ENCODE measurements at regions of chr16 and their contacts with region 1.

Region 1: DNA sequence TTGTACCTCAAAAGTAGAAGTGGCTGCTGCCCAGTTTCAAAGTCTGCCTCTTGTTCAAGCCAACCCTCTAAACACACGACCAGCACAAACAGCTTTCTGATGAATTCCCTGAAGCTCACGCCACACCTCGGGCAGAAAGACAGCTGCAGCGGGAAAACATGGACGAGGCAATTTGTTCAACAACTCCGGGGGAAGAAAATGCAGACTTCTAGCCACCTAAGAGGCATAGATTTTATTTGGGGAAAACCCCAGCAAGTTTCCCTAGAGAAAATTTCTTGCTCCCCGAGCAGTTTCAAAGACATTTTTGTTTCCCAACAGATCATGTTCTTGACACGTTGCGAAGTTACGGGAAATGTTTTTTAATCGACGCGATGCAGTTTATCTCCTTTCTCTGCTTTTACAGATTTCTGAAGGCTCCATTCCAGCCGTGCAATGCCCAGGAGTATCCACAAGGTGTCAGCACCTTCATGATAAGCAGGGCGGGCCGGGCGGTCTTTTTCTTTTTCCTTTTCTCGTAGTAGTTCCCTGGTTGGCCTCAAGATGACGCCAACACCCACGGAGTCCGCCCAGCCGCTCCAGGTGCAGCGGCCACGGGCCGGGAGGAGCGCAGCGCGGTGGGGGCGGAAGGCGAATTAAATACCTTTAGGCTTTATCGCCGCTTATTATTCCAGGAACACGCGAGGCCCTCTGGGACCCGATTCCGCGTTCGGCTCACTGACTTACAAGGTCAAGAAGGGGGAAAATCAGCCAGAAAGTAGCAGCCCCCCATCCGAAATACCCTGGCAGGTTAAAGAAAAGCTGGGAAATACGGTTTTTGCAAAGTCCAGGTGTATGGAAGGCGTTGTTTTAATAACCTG is 2.9 kb upstream of the FOXC2 start:
- DNase-seq: peak; percentile 81
- H3K4me3 ChIP-seq: peak overlapping the region; percentile 11 to 38 (median 12)
- H3K27ac ChIP-seq: no peak overlapping the region
- H3K4me1 ChIP-seq: peaks cover 11% of the 10 kb centered on the region
- H3K27me3 ChIP-seq: no peaks in the 10 kb centered on the region
- CTCF ChIP-seq: peak; percentile 100

Region 2: GRCh38 chr16:86590501-86591144 is 26.9 kb after region 1 on chr16:
- CTCF ChIA-PET with region 1: no interaction called
- dilution Hi-C with region 1: no loop called
- in situ Hi-C with region 1: no loop called
- intact Hi-C with region 1: no loop called
- DNase-seq: peak; percentile 79
- H3K4me3 ChIP-seq: no peak overlapping the region
- H3K27ac ChIP-seq: no peak overlapping the region
- H3K4me1 ChIP-seq: peaks cover 15% of the 10 kb centered on the region
- H3K27me3 ChIP-seq: peaks cover 5% of the 10 kb centered on the region
- CTCF ChIP-seq: no peak

Region 3: DNA sequence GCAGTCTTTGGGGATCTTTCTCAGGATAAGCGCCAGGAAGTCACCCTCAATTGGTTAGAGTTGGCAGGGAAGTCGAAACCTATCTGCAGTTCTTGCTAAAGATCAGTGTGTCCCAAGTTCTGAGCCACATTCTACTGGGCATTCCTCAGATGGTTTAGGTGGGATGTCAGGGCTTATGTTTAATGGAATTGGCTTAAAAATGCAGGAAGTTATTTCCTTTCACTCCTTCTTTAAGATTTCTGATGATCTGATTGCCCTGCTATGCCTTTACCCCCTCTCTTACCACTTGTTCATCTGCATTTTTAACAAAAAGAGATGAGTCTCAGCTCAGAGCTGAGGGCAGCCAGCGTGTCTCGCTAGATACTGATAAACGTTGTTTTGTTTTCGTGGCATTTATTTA is 45.4 kb after region 1 on chr16:
- CTCF ChIA-PET with region 1: no interaction called
- dilution Hi-C with region 1: no loop called
- in situ Hi-C with region 1: no loop called
- intact Hi-C with region 1: no loop called
- DNase-seq: no peak
- H3K4me3 ChIP-seq: no peak overlapping the region
- H3K27ac ChIP-seq: no peak overlapping the region
- H3K4me1 ChIP-seq: no peaks in the 10 kb centered on the region
- H3K27me3 ChIP-seq: no peaks in the 10 kb centered on the region
- CTCF ChIP-seq: no peak

Region 4: GRCh38 chr16:86664533-86665318 is 101.0 kb after region 1 on chr16:
- CTCF ChIA-PET with region 1: no interaction called
- dilution Hi-C with region 1: no loop called
- in situ Hi-C with region 1: no loop called
- intact Hi-C with region 1: no loop called
- DNase-seq: peak; percentile 99
- H3K4me3 ChIP-seq: peak overlapping the region in 1 of 3 experiments; percentile 23
- H3K27ac ChIP-seq: peak overlapping the region; percentile 96
- H3K4me1 ChIP-seq: peaks cover 28% of the 10 kb centered on the region
- H3K27me3 ChIP-seq: no peaks in the 10 kb centered on the region
- CTCF ChIP-seq: no peak

Region 5: DNA sequence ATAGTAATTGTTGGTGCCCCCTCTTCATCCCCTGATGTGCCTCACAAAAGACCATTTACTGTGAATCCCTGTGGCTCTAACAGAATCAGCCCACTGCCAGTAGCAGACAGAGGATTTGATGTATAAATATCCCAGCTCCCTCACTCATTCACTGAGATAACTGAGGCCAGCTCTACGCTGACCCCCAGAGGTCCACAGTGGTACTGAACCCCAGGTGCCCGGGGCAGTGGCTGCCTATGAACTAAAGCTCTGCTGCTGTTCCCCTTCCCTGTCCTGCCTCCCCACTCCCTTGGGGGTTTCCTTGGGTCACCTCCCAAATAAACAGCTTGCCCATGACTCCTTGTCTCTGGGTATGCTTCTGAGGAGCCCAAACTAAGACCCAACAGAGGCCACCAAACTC is 310.4 kb after region 1 on chr16:
- CTCF ChIA-PET with region 1: no interaction called
- dilution Hi-C with region 1: no loop called
- in situ Hi-C with region 1: no loop called
- intact Hi-C with region 1: loop called (anchors 1 kb)
- DNase-seq: peak; percentile 20
- H3K4me3 ChIP-seq: no peak overlapping the region
- H3K27ac ChIP-seq: no peak overlapping the region
- H3K4me1 ChIP-seq: no peaks in the 10 kb centered on the region
- H3K27me3 ChIP-seq: no peaks in the 10 kb centered on the region
- CTCF ChIP-seq: peak; percentile 65 to 68

Region 6: GRCh38 chr16:87056083-87056482 is 492.4 kb after region 1 on chr16:
- CTCF ChIA-PET with region 1: interaction called, 7 read pairs
- dilution Hi-C with region 1: no loop called
- in situ Hi-C with region 1: loop called (anchors 5 to 10 kb)
- intact Hi-C with region 1: loop called (anchors 1 kb)
- DNase-seq: peak; percentile 7
- H3K4me3 ChIP-seq: no peak overlapping the region
- H3K27ac ChIP-seq: no peak overlapping the region
- H3K4me1 ChIP-seq: no peaks in the 10 kb centered on the region
- H3K27me3 ChIP-seq: no peaks in the 10 kb centered on the region
- CTCF ChIP-seq: peak in 1 of 2 donors; percentile 24

Region 7: GRCh38 chr16:87203060-87203656 is 639.4 kb after region 1 on chr16:
- CTCF ChIA-PET with region 1: no interaction called
- dilution Hi-C with region 1: no loop called
- in situ Hi-C with region 1: no loop called
- intact Hi-C with region 1: loop called (anchors 5 kb)
- DNase-seq: peak; percentile 24
- H3K4me3 ChIP-seq: no peak overlapping the region
- H3K27ac ChIP-seq: no peak overlapping the region
- H3K4me1 ChIP-seq: peaks cover 24% of the 10 kb centered on the region
- H3K27me3 ChIP-seq: no peaks in the 10 kb centered on the region
- CTCF ChIP-seq: peak; percentile 78 to 88

Region 8: DNA sequence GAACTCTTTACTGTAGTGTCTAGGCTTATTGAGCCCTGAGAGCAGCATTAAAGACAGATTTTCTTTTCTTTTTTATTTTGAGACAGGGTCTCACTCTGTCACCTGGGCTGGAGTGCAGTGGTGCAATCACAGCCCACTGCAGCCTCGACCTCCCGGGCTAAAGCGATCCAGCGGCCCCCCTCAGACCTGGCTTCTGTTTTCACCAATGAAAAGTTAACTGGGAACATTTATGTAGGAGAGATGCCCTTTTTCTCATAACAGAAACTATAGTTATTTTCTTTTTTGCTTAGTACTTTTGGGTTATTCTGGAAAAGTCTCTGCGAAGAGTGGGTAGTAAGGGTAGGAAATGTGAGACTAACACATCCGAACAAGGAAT is 830.0 kb after region 1 on chr16:
- CTCF ChIA-PET with region 1: no interaction called
- dilution Hi-C with region 1: loop called (anchors 10 kb)
- in situ Hi-C with region 1: loop called in 1 of 2 experiments (anchors 25 kb)
- intact Hi-C with region 1: loop called (anchors 1 kb)
- DNase-seq: no peak
- H3K4me3 ChIP-seq: peak overlapping the region; percentile 68 to 90 (median 84)
- H3K27ac ChIP-seq: peak overlapping the region; percentile 87
- H3K4me1 ChIP-seq: peaks cover 28% of the 10 kb centered on the region
- H3K27me3 ChIP-seq: no peaks in the 10 kb centered on the region
- CTCF ChIP-seq: no peak

Region 9: GRCh38 chr16:87877938-87878507 is 1314.3 kb after region 1 on chr16:
- CTCF ChIA-PET with region 1: no interaction called
- dilution Hi-C with region 1: no loop called
- in situ Hi-C with region 1: no loop called
- intact Hi-C with region 1: loop called (anchors 5 kb)
- DNase-seq: no peak
- H3K4me3 ChIP-seq: no peak overlapping the region
- H3K27ac ChIP-seq: no peak overlapping the region
- H3K4me1 ChIP-seq: no peaks in the 10 kb centered on the region
- H3K27me3 ChIP-seq: peaks cover 15% of the 10 kb centered on the region
- CTCF ChIP-seq: peak in 1 of 2 donors; percentile 6